Left cardiac atrium (tissue), 4 donors: ENCODE measurements at regions of chr2 and their contacts with region 1.

Region 1: GRCh38 chr2:101697124-101698013 is at the start of gene MAP4K4:
- DNase-seq: peak; percentile 89
- ATAC-seq: peak; percentile 86 to 88
- total RNA-seq, gene MAP4K4: 59.5 to 74.6 TPM

Region 2: GRCh38 chr2:101419096-101419663 is 278.2 kb before region 1 on chr2:
- intact Hi-C with region 1: loop called in 1 of 2 experiments (anchors 10 kb)
- DNase-seq: peak; percentile 59
- ATAC-seq: peak; percentile 65 to 83

Region 3: DNA sequence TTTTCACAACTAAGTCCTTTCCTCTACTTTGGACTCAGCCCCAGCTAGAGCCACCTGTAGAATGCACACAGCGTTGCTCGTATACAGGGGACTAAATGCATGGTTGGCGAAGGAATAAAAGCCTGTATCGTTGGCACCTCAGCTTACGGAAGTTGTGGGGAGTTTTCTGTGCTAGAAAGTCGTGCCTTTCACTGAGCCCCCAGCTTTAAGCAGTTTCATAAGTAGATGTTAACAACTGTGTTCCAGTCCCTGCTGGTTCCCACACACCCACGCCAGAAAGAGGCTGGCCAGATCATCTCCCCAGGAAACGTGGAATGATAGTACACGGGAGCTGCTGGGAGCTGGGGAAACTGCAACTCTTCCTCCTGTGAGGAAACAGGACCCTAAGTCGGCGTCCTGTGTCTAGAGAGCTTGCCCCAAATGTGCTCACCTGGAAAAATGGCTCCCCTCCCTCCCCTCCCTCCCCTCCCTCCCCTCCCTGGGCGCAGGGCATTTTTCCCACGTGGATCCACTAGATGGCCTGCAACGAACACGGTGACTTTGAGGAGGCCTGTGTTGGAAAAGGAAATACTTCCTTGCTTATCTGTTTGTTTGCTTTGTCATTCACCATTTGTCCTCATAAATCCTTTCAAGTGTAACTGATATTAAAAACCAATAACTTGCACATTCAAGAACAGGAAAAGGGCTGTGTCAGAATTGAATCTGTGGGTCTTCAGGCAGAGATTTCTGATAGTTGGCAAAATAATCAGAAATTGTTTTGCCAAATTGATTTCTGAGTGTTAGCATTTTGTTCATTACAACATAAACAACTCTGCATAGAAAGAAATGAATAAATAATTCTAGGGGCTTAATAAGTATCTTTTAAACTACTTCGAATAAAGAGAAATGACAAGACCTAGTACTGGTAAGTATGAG is 178.5 kb before region 1 on chr2:
- intact Hi-C with region 1: loop called in 1 of 2 experiments (anchors 5 kb)
- DNase-seq: peak; percentile 34
- ATAC-seq: peak; percentile 66 to 86

Region 4: DNA sequence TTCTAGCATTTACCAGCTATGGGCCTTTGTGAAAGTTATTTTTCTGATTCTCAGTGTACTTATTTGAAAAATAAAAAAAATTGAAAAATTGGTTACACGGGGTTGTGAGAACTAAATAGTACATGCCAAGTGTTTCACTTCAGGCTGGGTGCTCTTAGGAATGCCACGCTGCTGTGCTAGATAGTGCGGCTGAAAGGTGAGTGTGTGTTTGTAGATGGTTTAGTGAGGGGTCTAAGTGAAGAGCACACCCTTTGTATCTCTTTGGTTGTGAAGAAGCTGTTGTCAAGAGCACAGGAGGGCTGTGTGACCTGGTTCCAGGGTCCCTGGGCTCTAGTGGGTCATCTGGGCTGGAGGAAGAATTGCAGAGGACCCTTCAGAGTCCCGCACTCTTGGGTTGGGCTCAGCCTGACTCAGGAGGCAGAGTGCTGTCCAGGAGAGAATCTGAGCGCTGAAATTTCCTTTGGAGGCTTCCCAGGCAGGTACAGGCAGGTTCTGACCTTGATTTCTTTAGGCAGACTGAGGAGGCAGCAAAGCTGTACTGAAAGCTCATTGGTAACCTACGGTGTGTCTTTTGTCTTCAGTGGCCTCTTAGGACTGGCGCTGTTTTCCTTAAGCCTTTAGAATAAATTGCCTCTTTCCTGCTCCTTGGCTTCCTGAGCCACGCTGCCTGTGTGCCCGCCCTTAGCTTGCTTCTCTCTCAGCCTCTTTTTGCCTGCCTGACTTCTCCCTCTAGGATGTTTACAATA is 44.6 kb after region 1 on chr2:
- intact Hi-C with region 1: loop called in 1 of 2 experiments (anchors 5 kb)
- DNase-seq: no peak
- ATAC-seq: peak in 1 of 2 donors; percentile 12

Region 5: DNA sequence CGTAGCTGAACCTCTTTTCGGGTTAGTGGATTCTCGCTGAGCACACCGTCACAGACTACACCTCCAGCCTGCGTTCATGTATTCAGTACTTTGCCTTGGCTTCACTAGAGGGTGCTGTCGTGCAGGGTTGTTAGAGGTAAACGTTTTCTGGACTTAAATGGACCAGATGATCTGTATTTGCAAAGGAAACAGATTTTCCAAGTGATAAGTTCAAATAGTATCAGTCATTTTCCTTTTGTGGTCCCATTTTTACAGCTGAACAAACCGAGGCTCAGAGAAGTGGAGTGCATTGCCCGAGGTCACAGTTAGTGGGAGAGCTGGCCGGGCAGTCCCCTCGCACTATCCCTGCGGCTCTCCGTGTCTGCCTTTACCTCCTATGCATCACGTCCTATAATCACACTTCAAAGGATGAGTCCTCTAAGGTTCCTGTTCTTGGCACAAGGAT is 126.0 kb after region 1 on chr2:
- intact Hi-C with region 1: loop called (anchors 2 to 5 kb)
- DNase-seq: peak; percentile 52
- ATAC-seq: peak; percentile 48 to 52

Region 6: DNA sequence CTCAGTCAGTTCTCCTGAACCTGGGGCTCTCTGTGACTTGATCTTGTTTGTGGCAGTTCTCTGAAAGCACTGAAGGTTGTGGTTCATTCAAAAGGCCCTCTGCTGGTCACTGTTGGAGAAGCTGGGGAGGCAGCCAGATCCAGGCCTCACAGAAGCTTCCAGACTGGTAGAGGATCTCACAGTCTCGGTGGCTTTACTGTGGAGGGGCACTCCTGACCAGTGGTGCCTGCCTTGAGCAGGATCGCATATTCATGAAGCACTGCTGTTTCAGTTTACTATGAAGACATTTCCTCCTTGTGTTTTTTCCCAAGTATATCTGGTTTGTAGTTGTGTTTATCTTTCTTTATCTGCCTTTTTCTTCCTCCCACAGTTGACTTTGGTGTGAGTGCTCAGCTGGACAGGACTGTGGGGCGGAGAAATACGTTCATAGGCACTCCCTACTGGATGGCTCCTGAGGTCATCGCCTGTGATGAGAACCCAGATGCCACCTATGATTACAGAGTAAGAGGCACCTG is 134.0 kb after region 1 on chr2:
- intact Hi-C with region 1: loop called (anchors 2 to 5 kb)
- DNase-seq: peak; percentile 77
- ATAC-seq: peak; percentile 76 to 87

Region 7: GRCh38 chr2:102190430-102191107 is 493.2 kb after region 1 on chr2:
- intact Hi-C with region 1: no loop called
- DNase-seq: no peak
- ATAC-seq: no peak